Endothelial cell of umbilical vein (primary cell): ENCODE measurements at regions of chr16 and their contacts with region 1.

Region 1: DNA sequence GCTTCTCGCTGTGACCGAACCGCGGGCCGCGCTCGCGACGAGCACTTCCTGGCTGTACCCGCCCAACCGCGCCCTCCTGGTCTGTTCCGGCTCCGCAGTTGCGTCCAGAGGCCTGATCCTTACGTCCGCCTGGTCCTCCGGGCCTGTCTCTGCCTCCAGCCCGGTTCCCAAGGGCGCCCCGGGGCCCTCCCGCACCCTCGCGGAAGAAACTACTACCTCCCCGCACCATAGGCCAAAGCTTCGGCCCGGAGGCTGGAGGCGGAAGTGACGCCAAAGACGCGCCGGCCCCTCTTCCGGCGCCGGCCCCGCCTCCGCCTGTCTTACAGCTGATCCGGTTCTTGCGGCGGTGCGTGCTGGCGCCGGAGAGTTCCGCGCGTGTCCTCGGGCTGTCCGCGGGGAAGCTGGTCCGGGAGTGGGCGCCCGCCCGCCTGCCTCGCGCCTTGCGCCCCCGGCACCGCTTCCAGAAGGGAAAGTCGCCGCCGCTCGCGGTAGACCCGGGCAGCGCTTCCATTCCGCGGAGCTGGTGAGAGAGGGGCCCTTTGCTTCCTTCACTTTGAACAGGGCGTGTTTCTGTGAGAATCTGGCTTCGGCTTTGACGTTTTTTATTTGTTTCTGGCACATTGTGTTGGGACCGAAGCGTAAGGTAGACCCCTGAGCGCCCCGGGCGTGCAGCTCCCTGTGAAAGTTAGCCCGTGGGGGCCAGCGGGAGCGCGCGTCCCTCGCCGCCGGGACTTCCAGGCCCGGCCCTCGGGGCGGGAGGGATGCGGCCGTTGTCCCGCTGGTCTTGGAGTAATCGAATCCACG is at the start of gene ZNF778:
- DNase-seq: peak; percentile 88
- H3K4me3 ChIP-seq: peak within 1 kb of the TSS; percentile 66 to 90 (median 85)
- H3K27ac ChIP-seq: peak within 1 kb of the TSS; percentile 57
- H3K4me1 ChIP-seq: peaks cover 10% of the 10 kb centered on the region
- H3K27me3 ChIP-seq: no peaks in the 10 kb centered on the region
- CTCF ChIP-seq: no peak
- POLR2A ChIP-seq: peak; percentile 94
- total RNA-seq, gene ZNF778: 7.1 and 10.9 TPM in 2 replicates

Region 2: GRCh38 chr16:88743693-88744576 is 473.7 kb before region 1 on chr16:
- CTCF ChIA-PET with region 1: interaction called, 4 read pairs
- POLR2A ChIA-PET with region 1: no interaction called
- dilution Hi-C with region 1: no loop called
- intact Hi-C with region 1: loop called (anchors 2 kb)
- DNase-seq: peak; percentile 62
- H3K4me3 ChIP-seq: no peak overlapping the region
- H3K27ac ChIP-seq: no peak overlapping the region
- H3K4me1 ChIP-seq: peaks cover 7% of the 10 kb centered on the region
- H3K27me3 ChIP-seq: no peaks in the 10 kb centered on the region
- CTCF ChIP-seq: peak; percentile 90 to 95
- POLR2A ChIP-seq: no peak

Region 3: GRCh38 chr16:88941913-88942909 is 275.4 kb before region 1 on chr16:
- CTCF ChIA-PET with region 1: interaction called, 9 read pairs
- POLR2A ChIA-PET with region 1: no interaction called
- dilution Hi-C with region 1: no loop called
- intact Hi-C with region 1: loop called (anchors 2 kb)
- DNase-seq: no peak
- H3K4me3 ChIP-seq: no peak overlapping the region
- H3K27ac ChIP-seq: no peak overlapping the region
- H3K4me1 ChIP-seq: no peaks in the 10 kb centered on the region
- H3K27me3 ChIP-seq: peaks cover 26 to 32% of the 10 kb centered on the region in 2 experiments
- CTCF ChIP-seq: peak; percentile 55 to 67
- POLR2A ChIP-seq: no peak

Region 4: DNA sequence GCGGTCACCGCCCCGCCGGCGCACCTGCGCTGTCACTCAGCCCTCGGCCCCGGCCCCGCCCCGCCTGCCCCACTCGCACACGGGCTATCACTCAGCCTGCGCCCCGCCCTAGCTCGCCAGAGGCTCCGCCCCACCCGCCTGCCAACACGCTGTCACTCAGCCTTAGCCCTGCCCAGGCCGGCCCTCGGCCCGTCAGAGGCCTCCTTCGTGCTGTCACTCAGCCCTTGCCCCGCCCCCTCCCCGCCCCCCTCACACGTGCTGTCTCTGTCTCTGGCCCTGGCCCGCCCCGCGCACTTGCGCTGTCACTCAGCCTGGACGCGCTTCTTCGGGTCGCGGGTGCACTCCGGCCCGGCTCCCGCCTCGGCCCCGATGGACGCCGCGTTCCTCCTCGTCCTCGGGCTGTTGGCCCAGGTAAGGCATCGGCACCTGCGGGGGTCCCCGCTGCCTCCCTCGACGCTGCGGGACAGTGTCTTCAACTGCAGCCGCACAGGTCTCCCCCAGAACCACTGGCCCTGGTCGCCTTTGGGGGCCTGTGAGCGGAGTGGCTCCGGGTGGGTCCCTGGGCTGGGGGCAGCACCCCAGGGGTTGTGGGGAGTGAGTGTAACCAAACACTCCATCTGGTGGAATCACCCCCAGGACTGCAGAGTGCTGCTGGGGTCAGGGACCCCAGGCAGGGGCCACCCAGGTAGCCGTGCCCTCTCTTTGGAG is 46.0 kb before region 1 on chr16 and contains the start of gene CDH15:
- CTCF ChIA-PET with region 1: no interaction called
- POLR2A ChIA-PET with region 1: no interaction called
- dilution Hi-C with region 1: no loop called
- intact Hi-C with region 1: loop called (anchors 1 kb)
- DNase-seq: peak; percentile 88
- H3K4me3 ChIP-seq: no peak within 1 kb of the TSS
- H3K27ac ChIP-seq: no peak within 1 kb of the TSS
- H3K4me1 ChIP-seq: peaks cover 3% of the 10 kb centered on the region
- H3K27me3 ChIP-seq: peaks cover 0 to 3% of the 10 kb centered on the region in 2 experiments
- CTCF ChIP-seq: no peak
- POLR2A ChIP-seq: no peak
- total RNA-seq, gene CDH15: not detected in 2 replicates

Region 5: DNA sequence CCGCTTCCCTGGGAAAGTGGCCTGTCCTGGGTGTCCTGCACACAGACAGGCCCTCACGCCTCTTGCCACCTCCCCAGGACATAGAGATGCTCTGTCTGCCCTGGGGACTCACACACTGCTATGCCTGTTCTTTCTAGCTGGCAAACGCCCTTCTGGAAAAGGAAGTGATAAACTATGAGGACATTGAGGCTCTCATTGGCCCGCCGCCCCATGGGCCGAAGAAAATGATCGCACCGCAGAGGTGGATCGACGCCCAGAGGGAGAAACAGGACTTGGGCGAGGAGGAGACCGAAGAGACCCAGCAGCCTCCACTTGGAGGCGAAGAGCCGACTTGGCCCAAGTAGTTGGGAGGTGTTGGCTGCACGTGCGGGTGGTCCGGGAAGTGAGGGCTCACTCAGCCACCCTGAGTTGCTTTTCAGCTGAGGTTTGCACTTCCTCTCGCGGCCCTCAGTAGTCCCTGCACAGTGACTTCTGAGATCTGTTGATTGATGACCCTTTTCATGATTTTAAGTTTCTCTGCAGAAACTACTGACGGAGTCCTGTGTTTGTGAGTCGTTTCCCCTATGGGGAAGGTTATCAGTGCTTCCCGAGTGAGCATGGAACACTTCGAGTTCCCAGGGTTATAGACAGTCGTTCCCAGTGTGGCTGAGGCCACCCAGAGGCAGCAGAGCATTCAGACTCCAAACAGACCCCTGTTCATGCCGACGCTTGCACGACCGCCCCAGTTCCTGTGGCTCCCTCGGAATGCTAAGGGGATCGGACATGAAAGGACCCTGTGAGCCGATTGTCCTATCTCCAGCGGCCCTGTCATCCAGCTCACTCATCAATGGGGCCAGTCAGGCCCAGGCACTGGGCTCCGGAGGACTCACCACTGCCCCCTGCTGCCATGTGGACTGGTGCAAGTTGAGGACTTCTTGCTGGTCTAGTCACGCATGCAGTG is 339.4 kb after region 1 on chr16:
- CTCF ChIA-PET with region 1: interaction called, 13 read pairs
- POLR2A ChIA-PET with region 1: no interaction called
- dilution Hi-C with region 1: no loop called
- intact Hi-C with region 1: no loop called
- DNase-seq: peak; percentile 85
- H3K4me3 ChIP-seq: no peak overlapping the region
- H3K27ac ChIP-seq: no peak overlapping the region
- H3K4me1 ChIP-seq: peaks cover 6% of the 10 kb centered on the region
- H3K27me3 ChIP-seq: no peaks in the 10 kb centered on the region
- CTCF ChIP-seq: peak; percentile 88 to 93
- POLR2A ChIP-seq: no peak